Activated B cell treated with CpG ODN at 0.5 μM for 24 hours (primary cell): ENCODE measurements at regions of chr4 and their contacts with region 1.

Region 1: DNA sequence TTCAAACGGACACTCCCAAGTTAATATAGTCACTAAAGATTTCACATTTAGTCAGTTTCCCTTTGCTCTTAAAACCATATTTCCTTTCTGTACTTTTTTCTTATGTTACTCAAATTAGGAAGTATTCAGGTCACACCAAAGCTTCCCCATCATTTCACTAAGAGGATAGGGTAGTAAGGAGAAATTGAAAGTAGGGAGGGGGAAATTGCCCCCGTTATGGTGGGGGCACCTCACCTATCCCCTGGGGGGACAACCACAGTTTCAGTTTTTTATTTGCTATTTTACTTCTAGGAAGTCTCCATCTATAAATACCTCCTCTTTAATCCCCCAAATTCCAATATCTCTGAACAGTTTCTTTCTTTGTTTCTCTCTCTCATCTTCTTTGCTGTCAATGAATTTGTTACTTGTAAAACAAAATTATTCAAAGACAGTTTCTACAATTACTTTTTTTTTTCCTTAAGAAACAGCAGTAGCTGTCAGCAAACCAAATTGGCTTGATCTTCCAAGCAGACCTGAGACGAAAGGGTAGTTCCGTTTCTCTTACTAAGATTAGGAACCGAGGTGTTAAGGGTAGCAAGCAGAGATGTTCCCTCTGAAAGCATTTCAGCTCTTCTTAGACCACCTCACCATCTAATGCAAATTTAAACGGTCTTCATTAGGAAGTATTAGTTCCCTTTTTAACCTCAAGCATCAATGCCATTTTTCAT is 160.2 kb upstream of the KLF3 start:
- DNase-seq: no peak
- ATAC-seq: peak; percentile 90
- H3K4me3 Mint-ChIP-seq: peak overlapping the region; percentile 66
- H3K27ac Mint-ChIP-seq: peak overlapping the region; percentile 74
- H3K4me1 Mint-ChIP-seq: peaks cover 32% of the 10 kb centered on the region
- H3K27me3 Mint-ChIP-seq: peaks cover 27% of the 10 kb centered on the region
- CTCF ChIP-seq: no peak

Region 2: GRCh38 chr4:38310446-38311043 is 193.3 kb before region 1 on chr4:
- CTCF ChIA-PET with region 1: no interaction called
- POLR2A ChIA-PET with region 1: interaction called, 5 read pairs
- intact Hi-C with region 1: loop called (anchors 2 kb)
- DNase-seq: no peak
- ATAC-seq: peak; percentile 80
- H3K4me3 Mint-ChIP-seq: peak overlapping the region; percentile 62
- H3K27ac Mint-ChIP-seq: peak overlapping the region; percentile 76
- H3K4me1 Mint-ChIP-seq: peaks cover 59% of the 10 kb centered on the region
- H3K27me3 Mint-ChIP-seq: no peaks in the 10 kb centered on the region
- CTCF ChIP-seq: no peak

Region 3: GRCh38 chr4:38319456-38320342 is 184.1 kb before region 1 on chr4:
- CTCF ChIA-PET with region 1: interaction called, 4 read pairs
- POLR2A ChIA-PET with region 1: no interaction called
- intact Hi-C with region 1: loop called (anchors 2 kb)
- DNase-seq: peak; percentile 84
- ATAC-seq: peak; percentile 77
- H3K4me3 Mint-ChIP-seq: peak overlapping the region; percentile 78
- H3K27ac Mint-ChIP-seq: peak overlapping the region; percentile 88
- H3K4me1 Mint-ChIP-seq: peaks cover 28% of the 10 kb centered on the region
- H3K27me3 Mint-ChIP-seq: no peaks in the 10 kb centered on the region
- CTCF ChIP-seq: peak; percentile 72

Region 4: DNA sequence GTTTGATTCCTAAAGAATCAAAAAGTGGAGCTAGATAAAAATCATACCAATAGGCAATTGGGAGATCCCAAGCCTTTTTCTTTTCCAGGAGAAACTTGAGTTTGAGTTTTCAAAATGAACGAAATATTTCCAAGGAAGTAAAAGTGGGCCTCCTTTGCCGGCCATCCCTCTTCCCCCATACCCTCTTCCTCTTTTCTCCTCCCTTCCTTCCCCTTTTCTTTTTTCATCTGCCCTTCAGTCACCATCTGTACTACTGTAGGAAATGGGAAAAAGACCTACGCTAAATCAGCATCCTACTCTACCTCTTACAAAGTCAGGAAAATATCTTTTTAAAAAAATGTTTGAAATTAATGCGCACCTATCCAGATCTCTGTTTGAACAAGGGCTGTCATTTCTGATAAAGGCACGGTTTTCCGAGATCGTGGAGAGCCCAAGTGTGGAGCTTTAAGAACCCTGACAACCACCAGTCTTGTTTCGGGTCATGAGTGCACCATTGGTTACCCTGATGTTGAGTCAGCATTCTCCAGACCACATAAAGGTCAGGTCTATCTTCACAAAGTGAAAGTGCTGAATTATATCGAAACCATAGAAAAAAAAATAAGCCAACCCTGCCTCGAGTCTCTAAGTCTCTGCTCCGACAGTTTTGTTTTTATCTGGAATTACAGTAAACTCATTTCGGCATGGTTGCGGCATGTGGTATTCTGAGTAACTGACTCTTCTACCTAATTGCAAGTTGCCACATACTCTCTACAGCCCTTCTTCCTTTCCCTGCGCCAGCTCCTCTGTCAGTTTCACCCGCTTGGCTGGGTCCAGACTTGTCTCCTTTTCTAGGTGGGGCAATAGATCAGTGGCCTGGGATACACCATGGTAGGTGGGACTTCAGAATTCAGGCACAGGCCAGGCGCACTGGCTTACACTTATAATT is 19.9 kb after region 1 on chr4:
- CTCF ChIA-PET with region 1: no interaction called
- POLR2A ChIA-PET with region 1: no interaction called
- intact Hi-C with region 1: loop called (anchors 2 kb)
- DNase-seq: no peak
- ATAC-seq: peak; percentile 91
- H3K4me3 Mint-ChIP-seq: peak overlapping the region; percentile 47
- H3K27ac Mint-ChIP-seq: no peak overlapping the region
- H3K4me1 Mint-ChIP-seq: peaks cover 8% of the 10 kb centered on the region
- H3K27me3 Mint-ChIP-seq: peaks cover 2% of the 10 kb centered on the region
- CTCF ChIP-seq: no peak